Posterior vena cava (tissue), 2 donors: ENCODE measurements at regions of chr5 and their contacts with region 1.

Region 1: GRCh38 chr5:883475-884181 is 9.0 kb downstream of the BRD9 start:
- DNase-seq: peak; percentile 70

Region 2: DNA sequence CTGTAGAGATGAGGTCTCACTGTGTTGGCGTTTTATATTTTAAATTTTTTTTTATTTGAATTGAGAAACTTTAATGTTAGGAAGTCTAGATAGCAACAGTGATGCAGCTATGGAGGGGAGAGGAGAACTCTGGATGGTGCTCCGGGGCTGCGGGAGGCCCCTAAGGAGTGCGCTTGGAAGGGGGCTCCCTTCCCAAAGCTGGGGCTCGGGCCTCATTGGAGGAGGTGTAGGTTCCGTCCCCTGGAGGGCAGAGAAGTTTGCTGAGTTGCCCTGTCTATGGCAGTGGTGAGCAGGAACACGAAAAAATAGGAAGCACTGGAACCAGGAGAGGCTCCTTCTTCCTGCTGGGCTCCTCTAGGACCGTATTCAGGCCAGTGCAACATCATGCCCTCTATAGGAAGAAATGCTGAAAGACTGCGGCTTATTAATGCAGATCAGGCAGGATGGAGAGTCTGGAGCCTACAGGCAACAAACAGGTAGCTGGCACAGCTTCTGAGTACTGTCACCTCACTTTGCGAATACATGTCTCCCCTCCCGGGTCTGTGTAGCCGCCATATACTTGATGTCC is 546.0 kb before region 1 on chr5:
- intact Hi-C with region 1: loop called in 1 of 2 experiments (anchors 5 kb)
- DNase-seq: no peak

Region 3: GRCh38 chr5:821504-821903 is 62.1 kb before region 1 on chr5:
- intact Hi-C with region 1: no loop called
- DNase-seq: no peak

Region 4: DNA sequence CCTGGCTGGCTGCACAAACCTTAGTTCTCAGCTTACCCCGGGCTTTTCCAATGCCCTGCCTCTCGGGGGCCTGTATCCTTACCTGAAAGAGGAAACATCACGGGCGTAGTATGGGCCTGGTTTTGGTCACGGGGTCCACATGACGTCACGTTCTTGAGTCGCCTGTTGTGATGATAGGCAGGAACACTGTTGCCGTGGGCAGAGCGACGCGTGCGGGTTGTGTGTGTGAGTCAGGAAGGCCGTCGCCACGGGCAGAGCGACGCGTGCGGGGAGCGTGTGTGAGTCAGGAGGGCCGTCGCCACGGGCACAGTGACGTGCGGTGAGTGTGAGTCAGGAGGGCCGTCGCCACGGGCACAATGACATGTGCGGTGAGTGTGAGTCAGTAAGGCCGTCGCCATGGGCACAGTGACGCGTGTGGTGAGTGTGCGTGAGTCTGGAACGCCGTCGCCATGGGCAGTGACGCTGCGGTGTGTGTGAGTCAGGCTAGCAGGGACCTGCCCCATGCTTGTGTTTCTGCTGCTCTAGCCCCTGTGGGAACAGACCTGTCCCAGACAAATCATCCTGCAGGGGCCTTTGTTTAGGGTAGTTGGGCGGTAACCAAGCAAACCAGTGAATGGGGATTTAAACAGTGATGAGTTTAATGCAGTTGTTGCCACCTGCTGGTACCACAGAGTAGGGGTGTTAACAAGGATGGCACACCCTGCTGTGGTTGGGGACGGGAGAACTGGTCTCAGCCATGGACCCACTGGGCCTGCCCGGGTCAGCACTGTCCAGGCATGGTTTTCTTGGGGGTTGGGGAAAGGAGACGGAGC is 28.9 kb after region 1 on chr5:
- intact Hi-C with region 1: no loop called
- DNase-seq: peak; percentile 68